GM10248 (cell line): ENCODE measurements at regions of chr6 and their contacts with region 1.

Region 1: GRCh38 chr6:113464959-113465358 is 392.2 kb upstream of the MARCKS start:
- DNase-seq: no peak
- CTCF ChIP-seq: no peak

Region 2: GRCh38 chr6:113414511-113414910 is 50.4 kb before region 1 on chr6:
- CTCF ChIA-PET with region 1: no interaction called
- POLR2A ChIA-PET with region 1: no interaction called
- DNase-seq: no peak
- CTCF ChIP-seq: no peak

Region 3: GRCh38 chr6:113428702-113429101 is 36.3 kb before region 1 on chr6:
- CTCF ChIA-PET with region 1: no interaction called
- POLR2A ChIA-PET with region 1: no interaction called
- DNase-seq: no peak
- CTCF ChIP-seq: no peak

Region 4: DNA sequence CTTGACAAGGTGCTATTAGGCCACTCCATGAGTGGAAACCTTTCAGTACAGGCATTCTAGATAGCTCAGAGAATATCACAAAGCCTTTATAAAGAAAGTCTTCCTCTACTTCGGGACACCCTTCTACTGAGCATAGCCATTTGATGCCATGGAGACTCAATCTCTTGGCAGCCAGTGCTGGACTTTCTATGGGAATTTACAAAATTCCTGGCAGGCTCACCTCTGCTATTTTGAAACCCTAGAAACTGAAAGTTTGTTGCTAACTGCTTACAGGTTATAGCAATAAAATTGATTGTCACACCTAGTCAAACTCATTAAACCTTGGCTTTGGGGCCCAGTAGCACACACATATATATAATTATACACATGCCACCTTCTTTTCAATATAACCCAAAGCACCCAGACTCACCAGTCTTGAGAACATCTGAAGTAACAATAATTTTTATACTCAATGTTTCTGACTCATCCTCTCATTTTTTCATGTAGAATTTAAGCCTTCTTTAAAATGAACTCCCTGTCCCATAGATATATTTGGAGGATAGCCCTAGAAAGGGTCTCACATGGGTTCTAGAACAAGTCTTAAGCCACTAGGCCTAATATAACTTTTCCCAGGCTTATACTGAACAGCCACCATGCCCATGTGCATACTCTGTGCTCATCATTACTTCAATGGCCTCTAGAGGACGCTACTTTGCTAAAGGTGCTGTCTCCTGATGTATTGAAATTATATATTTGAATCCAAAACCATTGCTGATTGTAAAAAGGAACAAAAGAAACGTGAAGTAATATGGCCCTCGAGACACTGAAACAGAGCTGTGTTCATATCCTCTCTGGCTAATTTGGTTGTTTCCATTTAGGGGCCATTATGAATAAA is 24.1 kb after region 1 on chr6:
- CTCF ChIA-PET with region 1: interaction called, 15 read pairs
- POLR2A ChIA-PET with region 1: interaction called, 4 read pairs
- DNase-seq: no peak
- CTCF ChIP-seq: no peak

Region 5: GRCh38 chr6:113744861-113745260 is 279.9 kb after region 1 on chr6:
- CTCF ChIA-PET with region 1: no interaction called
- POLR2A ChIA-PET with region 1: no interaction called
- DNase-seq: no peak
- CTCF ChIP-seq: no peak